Activated naive CD4-positive, alpha-beta T cell treated with anti-CD3 and anti-CD28 coated beads for 36 hours (primary cell): ENCODE measurements at regions of chr15 and their contacts with region 1.

Region 1: DNA sequence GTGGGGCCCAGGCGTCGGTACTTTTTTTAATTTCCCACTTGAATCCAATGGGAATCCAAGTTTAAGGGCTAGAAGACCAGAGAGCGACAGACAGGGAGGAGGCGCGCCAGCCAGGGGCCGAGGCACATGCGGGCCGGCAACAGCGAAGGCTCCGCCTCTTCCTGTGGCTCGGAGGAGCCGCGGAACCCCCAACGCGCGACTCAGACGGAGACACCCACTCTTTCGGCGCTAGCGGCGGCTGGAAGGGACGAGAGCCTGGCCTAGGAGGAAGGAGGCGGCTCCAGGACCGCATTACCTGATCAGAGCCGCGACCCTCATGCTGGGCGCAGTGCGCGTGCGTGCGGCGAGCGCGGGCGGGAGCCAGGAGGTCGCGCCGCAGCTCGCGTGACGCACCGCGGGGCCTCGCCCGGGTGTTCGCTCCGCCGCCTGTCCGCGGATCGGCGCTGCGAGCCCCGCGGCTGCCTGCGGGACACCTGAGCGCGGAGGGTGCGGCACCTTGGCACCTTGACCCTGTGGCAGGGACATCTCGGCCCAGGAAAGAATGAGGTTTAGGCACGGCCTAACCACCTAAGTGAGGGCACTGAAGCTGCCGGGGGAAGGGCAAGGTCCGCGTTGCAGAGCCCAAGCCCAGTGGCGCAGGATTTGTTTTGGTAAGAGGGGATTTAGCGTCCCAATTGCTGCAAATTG is at the start of gene DPH6:
- DNase-seq: peak; percentile 77
- H3K4me3 Mint-ChIP-seq: peak within 1 kb of the TSS; percentile 98
- H3K27ac Mint-ChIP-seq: peak within 1 kb of the TSS; percentile 97
- H3K4me1 Mint-ChIP-seq: peaks cover 28% of the 10 kb centered on the region
- H3K27me3 Mint-ChIP-seq: no peaks in the 10 kb centered on the region
- total RNA-seq, gene DPH6: 20.0 to 20.5 TPM

Region 2: DNA sequence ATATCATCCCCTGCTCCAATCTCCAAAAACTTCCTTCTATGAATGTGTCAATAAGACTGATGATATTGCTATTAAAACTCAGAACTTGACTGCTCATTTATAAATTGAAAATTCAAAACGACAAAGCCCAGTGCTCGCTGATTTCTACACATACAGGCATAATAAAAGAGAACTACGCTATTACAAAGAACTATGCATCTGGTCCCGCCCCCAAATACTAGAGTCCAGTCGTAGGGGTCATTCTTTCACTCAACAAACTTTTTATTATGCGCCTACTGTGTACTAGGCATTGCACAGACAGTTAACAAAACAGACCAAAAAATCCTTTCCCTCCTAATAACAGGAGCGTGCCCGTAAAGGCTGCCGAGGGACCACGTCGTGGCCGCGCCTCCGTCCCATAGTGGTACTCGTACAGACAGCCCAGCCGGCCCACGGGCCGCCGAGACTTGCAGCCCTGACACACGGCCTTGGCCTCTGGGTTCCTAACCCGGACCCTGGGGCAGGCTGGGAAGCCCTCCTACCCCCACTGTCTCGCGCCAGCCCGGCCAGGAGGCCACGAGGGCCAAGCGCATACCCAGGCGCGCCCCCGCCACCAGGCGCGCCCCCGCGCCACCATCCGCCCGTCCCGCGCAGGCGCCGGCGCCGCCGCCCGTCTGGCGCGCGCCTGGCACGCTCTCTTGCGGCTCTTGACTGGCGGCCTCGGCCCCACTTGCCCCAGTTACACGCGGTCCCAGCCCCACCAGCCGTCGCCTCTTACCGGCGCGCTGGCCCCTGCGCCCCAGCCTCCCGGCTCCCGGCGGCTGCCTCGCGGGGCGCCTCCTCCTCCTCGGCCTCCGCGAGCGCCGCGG is 1507.7 kb before region 1 on chr15:
- CTCF ChIA-PET with region 1: no interaction called
- intact Hi-C with region 1: loop called (anchors 5 kb)
- DNase-seq: peak; percentile 70
- H3K4me3 Mint-ChIP-seq: peak overlapping the region; percentile 92
- H3K27ac Mint-ChIP-seq: peak overlapping the region; percentile 92
- H3K4me1 Mint-ChIP-seq: peaks cover 17% of the 10 kb centered on the region
- H3K27me3 Mint-ChIP-seq: no peaks in the 10 kb centered on the region

Region 3: GRCh38 chr15:35206060-35206675 is 339.8 kb before region 1 on chr15:
- CTCF ChIA-PET with region 1: no interaction called
- intact Hi-C with region 1: no loop called
- DNase-seq: peak; percentile 12
- H3K4me3 Mint-ChIP-seq: no peak overlapping the region
- H3K27ac Mint-ChIP-seq: no peak overlapping the region
- H3K4me1 Mint-ChIP-seq: no peaks in the 10 kb centered on the region
- H3K27me3 Mint-ChIP-seq: no peaks in the 10 kb centered on the region

Region 4: GRCh38 chr15:35557544-35557943 is 11.6 kb after region 1 on chr15:
- CTCF ChIA-PET with region 1: no interaction called
- intact Hi-C with region 1: no loop called
- DNase-seq: no peak
- H3K4me3 Mint-ChIP-seq: no peak overlapping the region
- H3K27ac Mint-ChIP-seq: no peak overlapping the region
- H3K4me1 Mint-ChIP-seq: no peaks in the 10 kb centered on the region
- H3K27me3 Mint-ChIP-seq: no peaks in the 10 kb centered on the region

Region 5: DNA sequence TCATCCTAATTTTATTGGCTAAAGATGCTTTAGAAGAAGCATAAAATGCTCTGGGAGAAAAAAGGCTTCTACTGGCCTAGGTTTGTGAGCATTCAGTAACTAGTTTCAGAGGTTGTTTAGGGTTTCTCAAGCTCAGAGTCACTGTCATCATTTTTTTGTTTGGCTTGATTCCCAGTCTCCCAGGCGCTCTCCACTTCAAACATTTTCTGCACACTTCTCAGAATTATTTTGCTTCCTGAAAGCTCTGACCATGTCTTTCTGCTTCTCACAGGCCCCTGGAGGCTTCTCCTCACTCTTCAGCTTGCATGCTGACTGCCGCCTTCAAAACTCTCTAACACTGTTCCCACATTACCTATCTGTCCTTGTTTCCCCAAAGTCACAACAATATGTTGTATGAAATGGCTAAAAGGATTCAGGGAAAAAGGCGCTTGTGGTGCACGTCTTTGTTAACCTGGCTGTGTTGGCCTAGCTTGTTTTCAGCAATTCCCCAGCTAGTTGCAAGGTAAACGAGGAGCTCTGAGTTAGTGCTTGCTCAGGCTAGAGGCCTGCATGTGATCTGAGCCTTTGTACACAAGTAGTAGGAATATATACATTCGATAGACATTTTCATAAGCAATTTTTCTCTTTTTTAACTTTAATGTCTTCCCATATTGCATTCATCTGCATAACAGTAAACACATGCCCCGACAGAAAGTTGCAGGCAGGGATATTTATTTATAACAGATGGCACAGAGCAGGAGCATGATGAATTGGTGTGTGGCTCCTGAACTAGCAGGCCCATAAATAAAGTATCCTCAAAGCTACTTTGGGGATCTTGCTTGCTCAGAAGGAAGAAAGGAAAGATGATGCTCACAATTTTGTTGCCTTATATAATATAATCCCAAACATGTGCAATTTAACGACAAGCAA is 129.2 kb after region 1 on chr15:
- CTCF ChIA-PET with region 1: no interaction called
- intact Hi-C with region 1: loop called (anchors 5 kb)
- DNase-seq: no peak
- H3K4me3 Mint-ChIP-seq: no peak overlapping the region
- H3K27ac Mint-ChIP-seq: no peak overlapping the region
- H3K4me1 Mint-ChIP-seq: peaks cover 11% of the 10 kb centered on the region
- H3K27me3 Mint-ChIP-seq: no peaks in the 10 kb centered on the region

Region 6: GRCh38 chr15:36579792-36580431 is 1033.9 kb after region 1 on chr15:
- CTCF ChIA-PET with region 1: no interaction called
- intact Hi-C with region 1: loop called (anchors 1 kb)
- DNase-seq: peak; percentile 36
- H3K4me3 Mint-ChIP-seq: peak overlapping the region; percentile 79
- H3K27ac Mint-ChIP-seq: peak overlapping the region; percentile 79
- H3K4me1 Mint-ChIP-seq: peaks cover 25% of the 10 kb centered on the region
- H3K27me3 Mint-ChIP-seq: no peaks in the 10 kb centered on the region